ENCODE measurements at regions of chr9 and their contacts with region 1.

Region 1: DNA sequence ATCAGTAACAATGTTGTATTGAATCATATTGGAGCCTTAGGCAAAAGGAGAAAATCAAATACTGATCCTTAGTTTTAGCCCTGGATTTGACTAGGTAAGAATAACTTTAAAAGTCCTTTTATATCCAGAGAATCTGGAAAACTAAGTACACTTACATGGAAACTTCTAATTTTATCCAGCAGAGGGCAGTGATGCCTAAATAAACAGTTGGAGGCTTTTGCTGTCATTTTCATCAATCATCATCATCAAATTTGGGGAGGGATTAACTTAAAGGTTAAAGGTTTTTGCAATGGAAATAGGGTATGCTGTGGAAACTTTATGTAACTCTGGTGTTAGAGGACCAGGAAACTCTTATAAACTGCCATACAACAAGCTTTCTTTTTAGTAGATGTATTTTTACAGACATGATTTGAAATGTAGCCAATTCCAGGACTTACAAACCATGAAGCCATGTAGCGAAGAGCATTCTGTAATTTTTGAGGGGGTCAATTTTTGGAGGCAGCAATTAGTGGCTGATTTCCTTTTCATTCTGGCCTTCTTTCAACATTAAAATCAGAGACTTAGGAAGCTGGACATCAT is 112.7 kb downstream of the OSTF1 start:
- DNase-seq: peak; percentile 12
- H3K4me3 ChIP-seq: no peak overlapping the region
- H3K27ac ChIP-seq: no peak overlapping the region
- H3K4me1 ChIP-seq: no peaks in the 10 kb centered on the region
- H3K27me3 ChIP-seq: no peaks in the 10 kb centered on the region
- CTCF ChIP-seq: peak; percentile 29 to 60

Region 2: DNA sequence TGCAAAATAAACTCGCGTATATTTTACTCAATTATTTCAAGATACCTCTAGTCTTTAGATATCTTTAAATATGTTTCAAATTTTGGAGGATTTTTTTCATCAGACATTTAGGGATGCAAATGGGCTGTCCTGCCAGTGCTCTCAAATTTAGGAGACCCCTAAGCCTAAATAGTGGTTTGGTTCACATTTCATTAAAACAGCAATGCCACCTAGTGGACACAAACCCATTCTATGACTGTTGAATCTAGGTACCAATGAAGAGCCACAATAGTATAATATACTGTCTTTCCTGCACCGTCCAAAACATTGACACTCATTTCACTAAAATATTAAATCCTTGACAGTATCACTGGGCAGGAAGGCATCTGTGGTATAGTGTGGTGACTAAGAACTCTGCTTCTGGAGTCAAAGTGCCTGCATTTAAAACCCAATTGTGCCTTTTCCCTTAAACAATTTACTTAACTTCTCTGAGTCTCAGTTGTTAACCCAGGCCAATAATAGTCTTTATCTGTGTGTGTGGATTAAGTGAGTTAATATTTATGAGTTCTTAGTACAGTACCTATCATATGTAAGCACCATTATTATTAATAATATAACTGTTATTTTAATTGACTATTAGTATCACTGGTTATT is 555.9 kb before region 1 on chr9:
- CTCF ChIA-PET with region 1: no interaction called
- dilution Hi-C with region 1: no loop called
- in situ Hi-C with region 1: no loop called
- intact Hi-C with region 1: no loop called
- DNase-seq: peak; percentile 5
- H3K4me3 ChIP-seq: no peak overlapping the region
- H3K27ac ChIP-seq: no peak overlapping the region
- H3K4me1 ChIP-seq: no peaks in the 10 kb centered on the region
- H3K27me3 ChIP-seq: no peaks in the 10 kb centered on the region
- CTCF ChIP-seq: peak; percentile 51 to 67

Region 3: DNA sequence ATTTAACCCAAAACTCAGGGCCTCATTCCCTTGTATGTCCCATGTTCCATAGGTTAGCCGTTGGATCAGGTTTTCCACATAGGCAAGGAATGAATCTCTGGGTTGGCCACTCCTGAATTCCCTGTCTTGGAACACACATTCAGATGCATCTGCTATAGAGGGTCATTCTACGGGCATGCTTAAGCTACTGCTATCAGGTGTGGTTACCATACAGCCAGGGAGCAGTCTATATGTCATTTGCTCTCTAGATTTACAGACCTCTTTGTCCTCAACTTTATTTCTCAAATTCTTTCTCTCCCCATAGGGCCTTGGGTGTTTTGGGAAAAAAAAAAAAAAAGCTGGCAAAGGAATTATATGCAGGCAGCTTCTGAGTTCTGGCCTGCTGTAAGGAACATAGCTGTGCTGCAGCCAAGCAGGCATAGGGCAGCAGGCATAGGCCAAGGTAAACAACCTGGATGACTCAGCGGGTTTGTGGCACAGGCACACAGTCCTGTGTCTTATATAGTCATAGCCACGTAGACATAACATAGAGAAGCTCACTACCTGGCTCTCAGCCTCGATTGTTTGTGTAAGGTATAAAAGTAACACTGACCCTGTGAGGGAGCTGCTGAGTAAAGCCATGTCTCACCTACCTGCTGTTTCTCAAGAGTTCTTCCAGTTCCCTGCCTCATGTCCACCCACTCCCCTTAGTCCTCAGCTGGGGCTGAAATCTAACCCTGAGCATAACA is 28.8 kb after region 1 on chr9:
- CTCF ChIA-PET with region 1: no interaction called
- dilution Hi-C with region 1: no loop called
- in situ Hi-C with region 1: no loop called
- intact Hi-C with region 1: loop called (anchors 2 kb)
- DNase-seq: peak; percentile 97
- H3K4me3 ChIP-seq: no peak overlapping the region
- H3K27ac ChIP-seq: peak overlapping the region; percentile 13
- H3K4me1 ChIP-seq: peaks cover 16% of the 10 kb centered on the region
- H3K27me3 ChIP-seq: no peaks in the 10 kb centered on the region
- CTCF ChIP-seq: peak in 1 of 2 donors; percentile 56

Region 4: DNA sequence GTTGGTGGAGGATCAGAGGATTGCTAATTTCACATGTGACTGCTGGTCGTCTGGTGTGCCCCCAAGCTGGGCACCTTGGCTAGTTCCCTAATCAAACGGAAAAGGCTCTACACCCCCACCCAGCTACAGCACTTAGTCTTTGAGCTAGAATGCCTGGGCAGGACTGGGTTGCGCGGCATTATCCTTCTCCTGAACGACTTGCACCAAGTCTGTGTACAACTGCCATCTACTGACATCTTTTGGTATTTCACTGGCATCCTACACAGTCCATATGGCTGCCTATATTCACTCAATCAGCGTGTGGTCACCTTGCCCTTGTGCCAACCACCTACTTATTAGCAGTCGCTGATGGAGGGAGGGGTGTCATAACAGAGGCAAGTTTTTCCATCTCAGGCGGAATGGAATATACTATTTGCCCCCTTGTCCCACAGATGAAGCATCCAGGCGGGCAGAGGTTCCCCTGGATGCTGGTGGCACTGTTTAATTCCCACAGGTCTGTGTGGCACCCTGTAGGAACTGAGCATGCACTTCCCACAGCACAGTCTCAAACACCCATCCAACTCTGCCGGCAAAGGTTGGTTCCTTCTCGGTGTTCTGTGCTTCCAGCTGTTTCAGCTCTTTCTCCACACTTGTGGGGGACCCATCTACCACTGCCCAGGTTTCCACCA is 37.5 kb after region 1 on chr9:
- CTCF ChIA-PET with region 1: no interaction called
- dilution Hi-C with region 1: no loop called
- in situ Hi-C with region 1: loop called in 1 of 2 experiments (anchors 5 kb)
- intact Hi-C with region 1: loop called (anchors 1 kb)
- DNase-seq: peak; percentile 71
- H3K4me3 ChIP-seq: no peak overlapping the region
- H3K27ac ChIP-seq: peak overlapping the region; percentile 12
- H3K4me1 ChIP-seq: peaks cover 20% of the 10 kb centered on the region
- H3K27me3 ChIP-seq: no peaks in the 10 kb centered on the region
- CTCF ChIP-seq: peak; percentile 73 to 75

Region 5: GRCh38 chr9:75265525-75265972 is 64.6 kb after region 1 on chr9:
- CTCF ChIA-PET with region 1: no interaction called
- dilution Hi-C with region 1: no loop called
- in situ Hi-C with region 1: no loop called
- intact Hi-C with region 1: loop called (anchors 2 kb)
- DNase-seq: peak; percentile 27
- H3K4me3 ChIP-seq: no peak overlapping the region
- H3K27ac ChIP-seq: no peak overlapping the region
- H3K4me1 ChIP-seq: no peaks in the 10 kb centered on the region
- H3K27me3 ChIP-seq: no peaks in the 10 kb centered on the region
- CTCF ChIP-seq: peak; percentile 87

Region 6: GRCh38 chr9:76297721-76298239 is 1096.8 kb after region 1 on chr9:
- CTCF ChIA-PET with region 1: no interaction called
- dilution Hi-C with region 1: no loop called
- in situ Hi-C with region 1: no loop called
- intact Hi-C with region 1: loop called (anchors 1 kb)
- DNase-seq: no peak
- H3K4me3 ChIP-seq: no peak overlapping the region
- H3K27ac ChIP-seq: no peak overlapping the region
- H3K4me1 ChIP-seq: peaks cover 3% of the 10 kb centered on the region
- H3K27me3 ChIP-seq: no peaks in the 10 kb centered on the region
- CTCF ChIP-seq: no peak

Measured in mammary epithelial cell (primary cell).